ENCODE measurements at regions of chrX and their contacts with region 1.

Region 1: GRCh38 chrX:49915361-49916222 is 6.8 kb upstream of the CLCN5 start:
- DNase-seq: peak in 2 of 10 donors; percentile 31 to 32
- H3K4me3 ChIP-seq: no peak overlapping the region
- H3K27ac ChIP-seq: no peak overlapping the region
- H3K27me3 ChIP-seq: peaks cover 0 to 45% (median 17%) of the 10 kb centered on the region in 45 donors
- CTCF ChIP-seq: peak; percentile 49 to 88 (median 78)

Region 2: GRCh38 chrX:50075630-50076339 is 160.2 kb after region 1 on chrX:
- intact Hi-C with region 1: loop called (anchors 10 kb)
- DNase-seq: no peak
- H3K4me3 ChIP-seq: no peak overlapping the region
- H3K27ac ChIP-seq: no peak overlapping the region
- H3K27me3 ChIP-seq: peaks cover 0 to 63% (median 10%) of the 10 kb centered on the region in 45 donors
- CTCF ChIP-seq: no peak

Region 3: GRCh38 chrX:50081282-50081889 is 165.8 kb after region 1 on chrX:
- intact Hi-C with region 1: loop called (anchors 10 kb)
- DNase-seq: peak in 7 of 10 donors; percentile 4 to 41 (median 28)
- H3K4me3 ChIP-seq: no peak overlapping the region
- H3K27ac ChIP-seq: no peak overlapping the region
- H3K27me3 ChIP-seq: peaks cover 0 to 43% (median 9%) of the 10 kb centered on the region in 45 donors
- CTCF ChIP-seq: peak in 24 of 56 donors; percentile 5 to 51 (median 30)

Measured in dorsolateral prefrontal cortex (tissue), 120 donors.